Psoas muscle (tissue), 8 donors: ENCODE measurements at regions of chr3 and their contacts with region 1.

Region 1: DNA sequence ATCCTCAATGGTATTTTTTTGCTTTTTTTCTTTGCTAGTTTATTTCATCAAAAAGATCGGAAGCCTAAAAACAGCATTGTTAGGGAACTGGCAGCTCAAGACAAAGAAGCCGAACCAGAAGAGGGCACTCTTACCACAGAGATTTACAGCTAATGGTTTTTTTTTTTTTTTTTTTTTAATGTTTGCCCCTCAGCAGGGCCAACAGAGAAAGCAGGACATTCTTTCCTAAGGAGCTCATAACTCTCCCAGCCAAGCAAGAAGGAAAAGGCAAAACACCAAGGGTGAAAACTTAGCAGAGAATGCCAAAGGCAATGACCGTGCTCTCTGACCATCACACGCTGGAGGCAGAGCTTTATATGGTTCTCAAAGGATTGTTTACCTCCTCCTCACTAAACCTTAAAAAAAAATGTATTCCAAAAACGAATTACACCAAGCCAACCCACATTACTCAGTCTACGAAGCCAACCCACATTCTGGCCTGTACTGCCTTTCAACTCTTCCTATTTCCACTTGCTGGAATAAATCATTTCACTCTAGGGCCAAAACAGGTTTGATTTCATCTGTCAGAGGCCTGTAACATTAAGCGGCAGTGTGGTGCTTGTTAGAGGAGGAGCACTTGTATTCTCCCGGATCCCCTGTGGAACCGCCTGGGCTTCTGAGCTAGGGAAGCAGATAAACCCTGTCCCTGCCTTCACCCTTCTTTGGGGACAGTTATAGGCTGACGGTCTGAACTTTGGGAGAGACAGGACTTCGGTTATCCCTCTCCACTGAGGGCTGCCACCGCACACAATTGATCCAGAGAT is 35.6 kb upstream of the GYG1 start:
- DNase-seq: peak; percentile 19 to 56
- ATAC-seq: peak; percentile 71 to 90 (median 81)
- H3K4me3 ChIP-seq: peak overlapping the region; percentile 36
- H3K27ac ChIP-seq: peak overlapping the region; percentile 86
- H3K4me1 ChIP-seq: peaks cover 7% of the 10 kb centered on the region
- H3K27me3 ChIP-seq: no peaks in the 10 kb centered on the region
- CTCF ChIP-seq: peak; percentile 61

Region 2: GRCh38 chr3:148991194-148992026 is 35.7 kb after region 1 on chr3 and contains the start of gene GYG1:
- intact Hi-C with region 1: loop called in 1 of 2 experiments (anchors 1 kb)
- DNase-seq: peak; percentile 90 to 94
- ATAC-seq: peak; percentile 90 to 94 (median 92)
- H3K4me3 ChIP-seq: peak within 1 kb of the TSS; percentile 95
- H3K27ac ChIP-seq: peak within 1 kb of the TSS; percentile 100
- H3K4me1 ChIP-seq: peaks cover 35% of the 10 kb centered on the region
- H3K27me3 ChIP-seq: no peaks in the 10 kb centered on the region
- CTCF ChIP-seq: peak; percentile 33
- total RNA-seq, gene GYG1: 305 to 550 (median 419) TPM

Region 3: DNA sequence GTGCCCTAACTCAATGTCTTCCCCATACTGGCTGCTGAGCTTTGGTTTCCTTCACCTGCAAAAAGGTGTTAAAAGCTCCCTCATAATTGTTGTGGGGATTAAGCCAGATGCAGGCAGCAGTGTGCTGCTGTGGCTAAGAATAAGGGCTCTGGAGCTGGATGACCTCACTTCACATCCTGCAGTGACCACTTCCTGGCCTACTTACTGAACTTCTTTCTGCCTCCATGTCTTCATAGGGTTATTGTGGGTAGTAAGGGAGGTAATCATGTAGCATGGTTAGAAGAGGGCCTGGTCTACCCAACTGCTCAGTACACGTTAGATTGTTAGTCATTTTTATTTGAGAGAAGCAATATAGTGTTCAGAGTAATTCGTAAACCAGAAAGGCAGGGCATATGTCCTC is 54.0 kb after region 1 on chr3:
- intact Hi-C with region 1: loop called in 1 of 2 experiments (anchors 5 kb)
- DNase-seq: no peak
- ATAC-seq: peak; percentile 39 to 61 (median 57)
- H3K4me3 ChIP-seq: no peak overlapping the region
- H3K27ac ChIP-seq: peak overlapping the region; percentile 92
- H3K4me1 ChIP-seq: peaks cover 73% of the 10 kb centered on the region
- H3K27me3 ChIP-seq: no peaks in the 10 kb centered on the region
- CTCF ChIP-seq: no peak

Region 4: GRCh38 chr3:149114458-149114857 is 158.7 kb after region 1 on chr3:
- intact Hi-C with region 1: loop called in 1 of 2 experiments (anchors 5 kb)
- DNase-seq: no peak
- ATAC-seq: no peak
- H3K4me3 ChIP-seq: no peak overlapping the region
- H3K27ac ChIP-seq: no peak overlapping the region
- H3K4me1 ChIP-seq: no peaks in the 10 kb centered on the region
- H3K27me3 ChIP-seq: no peaks in the 10 kb centered on the region
- CTCF ChIP-seq: no peak

Region 5: DNA sequence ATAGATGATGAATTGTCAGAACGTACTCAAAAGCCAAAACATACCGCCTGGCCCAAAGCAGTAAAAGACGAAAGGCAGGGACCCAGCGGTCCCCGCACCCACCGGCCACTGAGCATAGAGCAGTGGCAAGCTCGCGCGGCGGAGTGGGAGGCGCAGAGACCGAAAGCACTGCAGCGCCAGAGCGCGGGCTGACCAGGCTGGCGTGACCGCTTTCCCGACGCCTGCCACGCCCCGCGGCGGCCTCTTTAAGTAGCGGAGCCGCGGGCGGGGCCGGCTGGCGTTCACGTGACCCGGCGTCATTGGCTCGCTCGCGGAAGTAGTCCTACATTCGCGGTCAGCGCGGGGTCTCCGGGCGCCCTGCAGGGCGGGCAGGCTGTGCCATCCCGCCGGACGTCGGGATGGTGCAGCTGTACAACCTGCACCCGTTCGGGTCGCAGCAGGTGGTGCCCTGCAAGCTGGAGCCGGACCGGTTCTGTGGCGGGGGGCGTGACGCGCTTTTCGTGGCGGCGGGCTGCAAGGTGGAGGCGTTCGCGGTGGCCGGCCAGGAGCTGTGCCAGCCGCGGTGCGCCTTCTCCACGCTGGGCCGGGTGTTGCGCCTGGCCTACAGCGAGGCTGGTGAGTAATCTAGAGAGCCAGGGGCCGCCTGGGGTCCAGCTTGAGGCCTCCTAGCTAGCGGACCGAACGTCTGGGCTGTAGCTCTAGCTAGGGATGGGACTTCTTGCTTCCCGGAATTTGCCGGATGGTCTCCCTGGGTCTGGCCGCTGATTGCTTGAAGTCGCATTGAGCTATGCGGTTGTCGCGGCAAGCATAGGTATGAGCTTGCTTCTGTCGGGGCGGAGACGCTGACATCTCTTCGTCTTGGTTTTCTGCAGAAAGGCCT is 173.8 kb after region 1 on chr3 and contains the start of gene HPS3:
- intact Hi-C with region 1: loop called in 1 of 2 experiments (anchors 10 kb)
- DNase-seq: peak; percentile 93 to 95
- ATAC-seq: peak; percentile 98 to 99 (median 99)
- H3K4me3 ChIP-seq: peak within 1 kb of the TSS; percentile 82
- H3K27ac ChIP-seq: peak within 1 kb of the TSS; percentile 79
- H3K4me1 ChIP-seq: peaks cover 27% of the 10 kb centered on the region
- H3K27me3 ChIP-seq: no peaks in the 10 kb centered on the region
- CTCF ChIP-seq: no peak
- total RNA-seq, gene HPS3: 2.6 to 5.4 (median 3.4) TPM

Region 6: GRCh38 chr3:149273096-149273751 is 317.5 kb after region 1 on chr3:
- intact Hi-C with region 1: loop called (anchors 1 to 5 kb)
- DNase-seq: no peak
- ATAC-seq: peak; percentile 80 to 96 (median 90)
- H3K4me3 ChIP-seq: no peak overlapping the region
- H3K27ac ChIP-seq: no peak overlapping the region
- H3K4me1 ChIP-seq: peaks cover 3% of the 10 kb centered on the region
- H3K27me3 ChIP-seq: no peaks in the 10 kb centered on the region
- CTCF ChIP-seq: peak; percentile 96

Region 7: GRCh38 chr3:149473357-149474249 is 517.9 kb after region 1 on chr3:
- intact Hi-C with region 1: loop called in 1 of 2 experiments (anchors 10 kb)
- DNase-seq: peak; percentile 42 to 78
- ATAC-seq: peak; percentile 92 to 96 (median 95)
- H3K4me3 ChIP-seq: no peak overlapping the region
- H3K27ac ChIP-seq: peak overlapping the region; percentile 71
- H3K4me1 ChIP-seq: peaks cover 30% of the 10 kb centered on the region
- H3K27me3 ChIP-seq: no peaks in the 10 kb centered on the region
- CTCF ChIP-seq: no peak